ENCODE measurements at regions of chr19 and their contacts with region 1.

Region 1: DNA sequence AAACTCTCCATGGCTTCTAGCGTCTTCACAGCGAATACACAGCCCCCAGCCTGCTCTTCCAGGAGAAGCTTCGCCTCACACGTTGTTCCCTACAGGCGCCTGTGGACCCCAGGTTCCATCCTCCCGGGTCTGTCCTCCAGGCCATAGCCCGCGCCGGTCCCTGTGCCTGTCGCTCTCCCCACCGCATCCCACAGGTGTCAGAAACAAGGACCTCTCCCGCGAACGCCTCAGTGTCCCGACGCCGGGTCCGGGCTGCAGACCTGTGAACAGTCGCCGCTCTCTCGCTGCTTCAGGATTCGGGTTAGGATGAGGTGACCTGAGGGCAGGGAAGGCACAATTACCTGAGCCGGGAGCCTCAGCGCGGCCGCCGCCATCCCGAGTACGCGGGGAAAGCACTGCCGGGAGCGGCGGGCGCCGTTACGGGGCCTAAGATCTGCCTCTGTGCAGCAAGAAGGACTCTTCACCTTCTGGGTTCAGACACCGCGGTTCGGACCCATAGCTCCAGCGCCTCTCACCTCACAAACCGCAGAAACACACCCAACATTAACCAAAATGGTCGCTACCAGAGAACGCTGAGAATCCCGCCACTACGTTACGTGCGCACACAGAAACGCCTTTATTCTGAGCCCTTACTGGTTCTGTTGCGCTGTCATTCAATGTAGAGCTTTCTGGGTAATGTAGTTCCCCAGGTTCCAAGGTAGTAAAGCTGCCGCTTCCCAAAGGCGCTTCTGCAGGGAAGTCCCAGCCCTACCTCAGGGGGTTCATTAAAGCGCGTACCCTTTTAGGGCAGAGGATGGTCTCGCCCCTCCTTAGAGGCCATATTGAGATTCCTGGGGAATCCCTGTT is at the start of gene ZNF418:
- DNase-seq: peak; percentile 40
- ATAC-seq: peak; percentile 99
- H3K4me3 Mint-ChIP-seq: peak within 1 kb of the TSS; percentile 96
- H3K27ac Mint-ChIP-seq: peak within 1 kb of the TSS; percentile 86
- H3K4me1 Mint-ChIP-seq: peaks cover 16% of the 10 kb centered on the region
- H3K27me3 Mint-ChIP-seq: no peaks in the 10 kb centered on the region
- CTCF ChIP-seq: no peak
- total RNA-seq, gene ZNF418: 21.3 and 26.5 TPM in 2 replicates

Region 2: DNA sequence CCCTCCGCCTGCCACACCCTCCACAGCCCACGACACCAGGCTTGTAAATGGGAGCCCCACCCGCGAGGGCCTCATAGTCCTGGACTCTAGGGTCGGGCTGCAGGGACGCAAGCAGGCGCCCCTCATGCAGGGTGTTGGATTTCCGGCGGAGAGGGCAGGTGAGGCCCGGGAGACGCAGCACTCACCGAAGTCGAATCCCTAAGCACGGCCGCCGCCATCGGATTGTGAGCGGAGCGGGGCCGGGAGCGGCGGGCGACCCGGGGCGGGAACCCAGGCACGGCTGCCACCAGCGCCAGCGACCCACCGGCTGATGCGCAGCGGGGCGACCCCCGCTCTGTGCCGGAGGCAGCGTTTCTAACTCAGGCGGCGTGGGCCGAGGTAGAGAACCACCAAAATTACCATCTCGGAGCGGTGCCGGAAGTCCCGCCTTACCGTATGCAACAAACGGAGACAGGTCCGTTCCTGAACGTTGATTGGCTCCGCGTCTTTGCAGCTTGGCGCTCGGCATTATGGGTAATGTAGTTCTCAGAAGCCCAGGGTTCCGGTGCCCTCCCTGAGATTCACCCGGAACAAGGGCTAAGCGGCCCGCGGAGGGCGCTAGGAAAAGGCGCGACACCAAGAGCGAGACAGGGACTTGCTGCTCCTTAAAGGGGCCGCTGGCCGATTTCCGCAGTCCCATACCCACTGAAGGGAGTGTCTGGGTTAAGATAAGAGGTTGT is 356.4 kb before region 1 on chr19 and contains the start of gene ZNF416:
- CTCF ChIA-PET with region 1: no interaction called
- POLR2A ChIA-PET with region 1: no interaction called
- intact Hi-C with region 1: no loop called
- DNase-seq: peak; percentile 79
- ATAC-seq: peak; percentile 92
- H3K4me3 Mint-ChIP-seq: peak within 1 kb of the TSS; percentile 86
- H3K27ac Mint-ChIP-seq: peak within 1 kb of the TSS; percentile 84
- H3K4me1 Mint-ChIP-seq: peaks cover 32% of the 10 kb centered on the region
- H3K27me3 Mint-ChIP-seq: no peaks in the 10 kb centered on the region
- CTCF ChIP-seq: no peak
- total RNA-seq, gene ZNF416: 12.6 and 13.8 TPM in 2 replicates

Region 3: DNA sequence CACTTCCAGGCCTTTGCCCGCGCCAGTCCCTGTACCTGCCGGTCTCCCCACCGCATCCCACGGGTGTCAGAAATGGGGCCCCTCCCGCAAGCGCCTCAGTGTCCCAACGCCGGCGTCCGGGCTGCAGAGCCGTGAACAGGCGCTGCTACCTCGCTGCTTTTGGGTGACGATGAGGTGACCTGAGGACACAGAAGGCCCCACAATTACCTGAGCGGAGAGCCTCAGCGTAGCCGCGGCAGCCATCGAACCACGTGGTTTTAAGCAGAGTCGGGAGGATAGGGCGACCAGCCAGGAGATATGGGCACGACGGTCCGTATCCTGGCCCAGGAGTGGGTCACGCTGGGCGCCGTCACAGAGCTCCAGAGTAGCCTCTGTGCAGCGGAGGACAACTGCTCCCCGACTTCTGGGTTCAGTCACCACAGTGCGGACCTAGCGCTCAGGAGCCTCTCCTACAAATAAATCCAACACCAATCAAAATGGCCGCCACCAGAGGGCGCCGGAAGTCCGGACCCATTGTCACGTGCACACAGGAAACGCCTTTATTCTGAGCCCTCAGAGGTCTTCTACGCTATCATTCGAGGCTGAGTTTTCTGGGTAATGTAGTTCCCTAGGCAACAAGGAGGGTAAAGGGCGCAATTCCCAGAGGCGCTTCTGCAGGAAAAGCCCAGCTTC is 46.3 kb before region 1 on chr19 and contains the start of gene ZNF814:
- CTCF ChIA-PET with region 1: no interaction called
- POLR2A ChIA-PET with region 1: no interaction called
- intact Hi-C with region 1: loop called (anchors 1 kb)
- DNase-seq: peak; percentile 80
- ATAC-seq: peak; percentile 95
- H3K4me3 Mint-ChIP-seq: peak within 1 kb of the TSS; percentile 95
- H3K27ac Mint-ChIP-seq: peak within 1 kb of the TSS; percentile 84
- H3K4me1 Mint-ChIP-seq: peaks cover 37% of the 10 kb centered on the region
- H3K27me3 Mint-ChIP-seq: no peaks in the 10 kb centered on the region
- CTCF ChIP-seq: no peak
- total RNA-seq, gene ZNF814: 64.7 and 84.0 TPM in 2 replicates

Region 4: GRCh38 chr19:58091251-58091995 is 156.4 kb after region 1 on chr19:
- CTCF ChIA-PET with region 1: no interaction called
- POLR2A ChIA-PET with region 1: no interaction called
- intact Hi-C with region 1: no loop called
- DNase-seq: no peak
- ATAC-seq: no peak
- H3K4me3 Mint-ChIP-seq: no peak overlapping the region
- H3K27ac Mint-ChIP-seq: peak overlapping the region; percentile 41
- H3K4me1 Mint-ChIP-seq: no peaks in the 10 kb centered on the region
- H3K27me3 Mint-ChIP-seq: no peaks in the 10 kb centered on the region
- CTCF ChIP-seq: no peak